Naive thymus-derived CD4-positive, alpha-beta T cell (primary cell): ENCODE measurements at regions of chr5 and their contacts with region 1.

Region 1: GRCh38 chr5:172065501-172065990 is 59.1 kb upstream of the FBXW11 start:
- DNase-seq: no peak
- ATAC-seq: no peak
- H3K4me3 ChIP-seq: no peak overlapping the region
- H3K4me3 Mint-ChIP-seq: peak overlapping the region; percentile 7 to 86 (median 78)
- H3K27ac ChIP-seq: peak overlapping the region; percentile 82
- H3K27ac Mint-ChIP-seq: peak overlapping the region; percentile 87 to 99 (median 96)
- H3K4me1 ChIP-seq: peaks cover 36 to 48% of the 10 kb centered on the region in 2 donors
- H3K4me1 Mint-ChIP-seq: peaks cover 53 to 85% (median 75%) of the 10 kb centered on the region in 7 donors
- H3K27me3 ChIP-seq: no peaks in the 10 kb centered on the region
- H3K27me3 Mint-ChIP-seq: no peaks in the 10 kb centered on the region

Region 2: DNA sequence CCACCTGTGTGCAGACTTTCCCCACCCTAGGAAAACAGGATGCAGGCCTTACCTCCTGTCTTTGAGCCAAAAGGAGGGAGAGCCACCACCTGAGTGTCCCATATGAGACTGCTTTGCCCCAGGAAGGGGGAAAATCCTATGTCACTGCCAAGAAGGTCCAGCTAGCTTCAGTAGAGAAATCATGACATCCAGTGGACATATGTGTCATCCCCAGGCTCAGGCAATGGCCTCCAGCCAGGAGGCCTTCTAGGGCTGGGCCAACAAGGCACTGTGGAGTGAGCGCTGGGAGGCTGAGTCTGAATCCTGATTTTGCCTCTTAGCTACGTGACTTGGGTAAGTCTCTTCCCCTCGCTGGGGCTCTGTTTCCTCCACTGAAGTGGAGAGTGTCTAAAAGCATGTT is 219.7 kb before region 1 on chr5:
- CTCF ChIA-PET with region 1: no interaction called
- POLR2A ChIA-PET with region 1: no interaction called
- intact Hi-C with region 1: no loop called
- DNase-seq: no peak
- ATAC-seq: no peak
- H3K4me3 ChIP-seq: no peak overlapping the region
- H3K4me3 Mint-ChIP-seq: no peak overlapping the region
- H3K27ac ChIP-seq: no peak overlapping the region
- H3K27ac Mint-ChIP-seq: no peak overlapping the region
- H3K4me1 ChIP-seq: no peaks in the 10 kb centered on the region
- H3K4me1 Mint-ChIP-seq: peaks cover 0 to 10% (median 3%) of the 10 kb centered on the region in 7 donors
- H3K27me3 ChIP-seq: no peaks in the 10 kb centered on the region
- H3K27me3 Mint-ChIP-seq: no peaks in the 10 kb centered on the region

Region 3: DNA sequence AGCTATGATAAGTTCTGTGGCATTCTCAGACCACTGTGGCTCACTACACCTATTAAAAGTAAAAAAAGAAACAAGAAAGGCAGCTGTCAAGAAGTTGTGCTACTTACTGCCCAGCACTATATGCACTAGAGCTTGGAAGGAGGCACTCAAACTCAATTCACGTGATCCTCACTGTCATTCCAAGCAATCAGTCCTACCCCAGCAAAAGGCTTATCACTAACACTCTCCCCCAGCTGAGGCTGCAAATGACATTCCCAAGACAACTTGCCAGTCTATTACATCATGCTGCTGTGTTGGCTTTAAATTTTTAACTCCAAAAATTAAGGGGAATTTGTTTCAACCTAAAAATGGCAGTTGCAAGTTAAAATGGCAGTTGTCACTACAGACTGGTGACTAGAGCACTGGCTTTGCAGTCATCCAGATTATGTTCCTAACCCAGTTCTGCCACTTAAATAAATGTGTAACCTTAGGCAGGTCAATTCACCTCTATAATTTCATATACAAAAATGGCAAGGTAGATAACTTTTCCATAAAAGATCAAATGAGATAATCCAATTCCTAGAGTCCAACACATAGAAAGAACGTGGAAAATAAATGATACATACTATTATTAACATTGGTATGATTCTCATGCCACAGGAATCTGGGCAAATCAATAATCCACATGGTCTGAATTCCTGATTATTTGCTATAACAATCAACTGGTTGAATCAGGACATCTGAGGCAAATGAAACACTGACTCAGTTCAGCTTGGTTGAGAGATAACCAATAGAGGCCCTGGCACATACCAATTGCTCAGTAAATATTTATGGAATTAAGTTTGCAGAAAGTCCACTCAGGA is 111.5 kb before region 1 on chr5:
- CTCF ChIA-PET with region 1: no interaction called
- POLR2A ChIA-PET with region 1: no interaction called
- intact Hi-C with region 1: no loop called
- DNase-seq: no peak
- ATAC-seq: no peak
- H3K4me3 ChIP-seq: no peak overlapping the region
- H3K4me3 Mint-ChIP-seq: no peak overlapping the region
- H3K27ac ChIP-seq: no peak overlapping the region
- H3K27ac Mint-ChIP-seq: peak overlapping the region in 1 of 9 donors; percentile 3
- H3K4me1 ChIP-seq: peaks cover 24 to 29% of the 10 kb centered on the region in 2 donors
- H3K4me1 Mint-ChIP-seq: peaks cover 21 to 81% (median 65%) of the 10 kb centered on the region in 7 donors
- H3K27me3 ChIP-seq: no peaks in the 10 kb centered on the region
- H3K27me3 Mint-ChIP-seq: no peaks in the 10 kb centered on the region

Region 4: GRCh38 chr5:172044631-172045314 is 20.8 kb before region 1 on chr5:
- CTCF ChIA-PET with region 1: interaction called, 9 read pairs
- POLR2A ChIA-PET with region 1: interaction called, 3 read pairs
- intact Hi-C with region 1: loop called in 1 of 2 experiments (anchors 1 kb)
- DNase-seq: no peak
- ATAC-seq: no peak
- H3K4me3 ChIP-seq: no peak overlapping the region
- H3K4me3 Mint-ChIP-seq: no peak overlapping the region
- H3K27ac ChIP-seq: no peak overlapping the region
- H3K27ac Mint-ChIP-seq: peak overlapping the region in 7 of 9 donors; percentile 36 to 90 (median 55)
- H3K4me1 ChIP-seq: no peaks in the 10 kb centered on the region
- H3K4me1 Mint-ChIP-seq: peaks cover 7 to 22% (median 15%) of the 10 kb centered on the region in 7 donors
- H3K27me3 ChIP-seq: no peaks in the 10 kb centered on the region
- H3K27me3 Mint-ChIP-seq: no peaks in the 10 kb centered on the region

Region 5: DNA sequence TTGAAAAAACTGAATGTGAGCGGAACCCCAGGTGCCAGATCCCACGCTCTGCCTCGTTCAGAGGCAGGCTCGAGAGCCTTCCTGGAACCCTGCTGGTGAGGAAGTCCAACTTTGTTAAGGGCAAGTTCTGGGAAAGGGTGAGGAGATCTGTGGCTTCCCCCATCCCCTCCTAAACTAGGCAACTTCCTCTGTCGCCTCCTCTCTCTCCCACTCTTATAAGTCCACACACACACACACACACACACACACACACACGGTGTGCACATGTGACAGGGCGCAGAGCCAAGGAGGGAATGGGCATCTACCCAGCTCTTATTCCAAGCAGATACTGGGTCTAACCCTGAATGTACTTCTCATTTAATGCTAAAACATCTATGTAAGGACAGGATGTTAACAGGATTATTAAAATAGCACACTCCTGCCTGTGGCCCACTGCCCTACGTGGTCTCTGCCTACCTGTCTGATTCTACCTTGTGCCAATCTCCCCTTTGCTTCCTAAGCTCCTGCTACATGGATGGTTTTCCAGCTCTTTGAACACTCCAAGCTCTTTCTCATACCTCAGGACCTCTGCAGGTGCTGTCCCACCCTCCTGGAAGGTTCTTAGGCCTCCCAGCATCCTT is 13.3 kb after region 1 on chr5:
- CTCF ChIA-PET with region 1: interaction called, 8 read pairs
- POLR2A ChIA-PET with region 1: interaction called, 11 read pairs
- intact Hi-C with region 1: loop called in 1 of 2 experiments (anchors 1 kb)
- DNase-seq: no peak
- ATAC-seq: peak; percentile 43
- H3K4me3 ChIP-seq: no peak overlapping the region
- H3K4me3 Mint-ChIP-seq: peak overlapping the region in 8 of 10 donors; percentile 1 to 74 (median 46)
- H3K27ac ChIP-seq: peak overlapping the region; percentile 51
- H3K27ac Mint-ChIP-seq: peak overlapping the region; percentile 65 to 94 (median 83)
- H3K4me1 ChIP-seq: peaks cover 0 to 7% of the 10 kb centered on the region in 2 donors
- H3K4me1 Mint-ChIP-seq: peaks cover 13 to 42% (median 21%) of the 10 kb centered on the region in 7 donors
- H3K27me3 ChIP-seq: no peaks in the 10 kb centered on the region
- H3K27me3 Mint-ChIP-seq: no peaks in the 10 kb centered on the region

Region 6: GRCh38 chr5:172106511-172107356 is 41.2 kb after region 1 on chr5:
- CTCF ChIA-PET with region 1: interaction called, 4 read pairs
- POLR2A ChIA-PET with region 1: interaction called, 7 read pairs
- intact Hi-C with region 1: loop called in 1 of 2 experiments (anchors 1 kb)
- DNase-seq: peak; percentile 31 to 78 (median 59)
- ATAC-seq: peak; percentile 43
- H3K4me3 ChIP-seq: no peak overlapping the region
- H3K4me3 Mint-ChIP-seq: peak overlapping the region in 8 of 10 donors; percentile 20 to 49 (median 39)
- H3K27ac ChIP-seq: peak overlapping the region; percentile 24
- H3K27ac Mint-ChIP-seq: peak overlapping the region; percentile 18 to 88 (median 81)
- H3K4me1 ChIP-seq: peaks cover 31 to 37% of the 10 kb centered on the region in 2 donors
- H3K4me1 Mint-ChIP-seq: peaks cover 23 to 61% (median 43%) of the 10 kb centered on the region in 7 donors
- H3K27me3 ChIP-seq: no peaks in the 10 kb centered on the region
- H3K27me3 Mint-ChIP-seq: no peaks in the 10 kb centered on the region

Region 7: GRCh38 chr5:172114875-172115422 is 49.4 kb after region 1 on chr5:
- CTCF ChIA-PET with region 1: no interaction called
- POLR2A ChIA-PET with region 1: interaction called, 7 read pairs
- intact Hi-C with region 1: loop called (anchors 1 kb)
- DNase-seq: peak; percentile 35 to 78 (median 44)
- ATAC-seq: peak; percentile 70
- H3K4me3 ChIP-seq: peak overlapping the region; percentile 50
- H3K4me3 Mint-ChIP-seq: peak overlapping the region; percentile 54 to 90 (median 80)
- H3K27ac ChIP-seq: peak overlapping the region; percentile 70
- H3K27ac Mint-ChIP-seq: peak overlapping the region; percentile 75 to 98 (median 94)
- H3K4me1 ChIP-seq: peaks cover 67 to 80% of the 10 kb centered on the region in 2 donors
- H3K4me1 Mint-ChIP-seq: peaks cover 48 to 86% (median 72%) of the 10 kb centered on the region in 7 donors
- H3K27me3 ChIP-seq: no peaks in the 10 kb centered on the region
- H3K27me3 Mint-ChIP-seq: no peaks in the 10 kb centered on the region

Region 8: GRCh38 chr5:172603251-172603806 is 537.8 kb after region 1 on chr5:
- CTCF ChIA-PET with region 1: no interaction called
- POLR2A ChIA-PET with region 1: no interaction called
- intact Hi-C with region 1: no loop called
- DNase-seq: no peak
- ATAC-seq: no peak
- H3K4me3 ChIP-seq: no peak overlapping the region
- H3K4me3 Mint-ChIP-seq: no peak overlapping the region
- H3K27ac ChIP-seq: no peak overlapping the region
- H3K27ac Mint-ChIP-seq: no peak overlapping the region
- H3K4me1 ChIP-seq: no peaks in the 10 kb centered on the region
- H3K4me1 Mint-ChIP-seq: no peaks in the 10 kb centered on the region
- H3K27me3 ChIP-seq: no peaks in the 10 kb centered on the region
- H3K27me3 Mint-ChIP-seq: peaks cover 2 to 21% (median 15%) of the 10 kb centered on the region in 5 donors